ENCODE measurements at regions of chr14 and their contacts with region 1.

Region 1: DNA sequence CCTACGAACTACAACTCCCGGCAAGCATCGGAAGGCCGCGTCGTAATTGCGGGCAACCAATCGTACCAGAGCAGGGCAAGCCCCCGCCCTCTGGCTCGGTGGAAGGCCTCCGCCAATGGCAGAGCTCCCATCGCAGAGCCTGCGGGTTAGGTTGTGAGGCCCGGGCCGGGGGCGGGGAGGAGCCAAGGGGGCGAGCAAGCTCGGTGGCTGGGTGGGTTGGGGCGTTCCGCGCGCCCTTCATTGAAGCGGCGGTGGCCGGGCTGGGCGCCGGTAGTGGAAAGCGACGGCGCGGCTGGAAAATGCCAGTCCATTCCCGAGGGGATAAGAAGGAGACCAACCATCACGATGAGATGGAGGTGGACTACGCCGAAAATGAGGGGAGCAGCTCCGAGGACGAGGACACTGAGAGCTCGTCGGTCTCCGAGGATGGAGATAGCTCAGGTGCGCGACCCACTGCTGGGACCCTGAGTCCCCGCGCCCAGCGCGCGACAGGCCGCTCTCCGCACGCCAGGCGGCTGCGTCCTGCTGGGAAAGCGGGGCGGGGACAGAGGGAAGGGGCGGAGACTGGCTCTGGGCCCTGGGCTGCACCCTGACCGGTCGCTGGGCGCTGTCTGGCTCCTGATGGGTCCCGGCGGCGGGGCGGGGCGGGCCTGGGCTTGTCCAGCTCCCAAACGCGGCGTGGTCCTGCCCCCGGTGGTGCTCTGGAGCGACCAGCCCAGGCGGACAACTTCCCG is at the start of gene BRMS1L:
- DNase-seq: peak; percentile 91 to 98 (median 96)
- ATAC-seq: peak; percentile 98
- H3K4me3 ChIP-seq: peak within 1 kb of the TSS; percentile 92 to 97
- H3K4me3 Mint-ChIP-seq: peak within 1 kb of the TSS; percentile 95
- H3K27ac ChIP-seq: peak within 1 kb of the TSS; percentile 88 to 91
- H3K27ac Mint-ChIP-seq: peak within 1 kb of the TSS; percentile 89
- H3K4me1 ChIP-seq: no peaks in the 10 kb centered on the region
- H3K4me1 Mint-ChIP-seq: peaks cover 24% of the 10 kb centered on the region
- H3K27me3 ChIP-seq: no peaks in the 10 kb centered on the region
- H3K27me3 Mint-ChIP-seq: no peaks in the 10 kb centered on the region
- CTCF ChIP-seq: no peak
- total RNA-seq, gene BRMS1L: 15.5 to 17.9 TPM

Region 2: DNA sequence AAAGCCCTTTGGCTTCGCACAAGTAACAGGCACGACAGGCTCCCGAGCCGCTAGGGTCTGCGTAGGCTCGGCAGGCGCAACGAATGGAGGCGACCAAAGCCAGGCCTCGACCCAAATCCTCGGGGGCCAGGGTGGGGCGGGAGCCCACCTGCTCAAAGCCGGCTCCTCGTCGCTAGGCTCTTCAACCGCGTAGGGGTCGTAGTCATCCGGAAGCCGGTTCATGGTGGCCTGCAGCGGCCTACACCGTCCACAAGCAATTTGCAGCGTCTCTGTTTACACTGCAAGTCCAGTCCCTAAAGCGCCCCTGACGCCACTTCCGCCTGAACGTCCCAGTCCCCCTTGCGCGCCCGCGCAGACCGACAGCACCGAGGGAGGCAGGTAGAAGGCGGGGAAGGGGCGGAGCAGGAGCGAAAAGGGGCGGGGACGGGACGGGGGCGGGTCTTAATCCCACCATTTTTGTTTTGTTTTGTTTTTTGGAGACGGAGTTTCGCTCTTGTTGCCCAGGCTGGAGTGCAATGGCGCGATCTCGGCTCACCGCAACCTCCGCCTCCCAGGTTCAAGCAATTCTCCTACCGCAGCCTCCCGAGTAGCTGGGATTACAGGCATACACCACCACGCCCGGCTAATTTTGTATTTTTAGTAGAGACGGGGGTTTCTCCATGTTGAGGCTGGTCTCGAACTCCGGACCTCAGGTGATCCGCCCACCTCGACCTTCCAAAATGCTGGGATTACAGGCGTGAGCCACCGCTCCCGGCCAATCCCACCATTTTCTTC is 1286.8 kb before region 1 on chr14 and contains the start of gene EAPP:
- CTCF ChIA-PET with region 1: no interaction called
- POLR2A ChIA-PET with region 1: no interaction called
- intact Hi-C with region 1: loop called in 1 of 2 experiments (anchors 10 kb)
- DNase-seq: peak; percentile 88 to 97 (median 95)
- ATAC-seq: peak; percentile 98
- H3K4me3 ChIP-seq: peak within 1 kb of the TSS; percentile 94 to 95
- H3K4me3 Mint-ChIP-seq: peak within 1 kb of the TSS; percentile 97
- H3K27ac ChIP-seq: peak within 1 kb of the TSS; percentile 96 to 97
- H3K27ac Mint-ChIP-seq: peak within 1 kb of the TSS; percentile 98
- H3K4me1 ChIP-seq: peaks cover 16% of the 10 kb centered on the region
- H3K4me1 Mint-ChIP-seq: peaks cover 34% of the 10 kb centered on the region
- H3K27me3 ChIP-seq: no peaks in the 10 kb centered on the region
- H3K27me3 Mint-ChIP-seq: no peaks in the 10 kb centered on the region
- CTCF ChIP-seq: no peak
- total RNA-seq, gene EAPP: 91.0 to 91.4 TPM

Region 3: DNA sequence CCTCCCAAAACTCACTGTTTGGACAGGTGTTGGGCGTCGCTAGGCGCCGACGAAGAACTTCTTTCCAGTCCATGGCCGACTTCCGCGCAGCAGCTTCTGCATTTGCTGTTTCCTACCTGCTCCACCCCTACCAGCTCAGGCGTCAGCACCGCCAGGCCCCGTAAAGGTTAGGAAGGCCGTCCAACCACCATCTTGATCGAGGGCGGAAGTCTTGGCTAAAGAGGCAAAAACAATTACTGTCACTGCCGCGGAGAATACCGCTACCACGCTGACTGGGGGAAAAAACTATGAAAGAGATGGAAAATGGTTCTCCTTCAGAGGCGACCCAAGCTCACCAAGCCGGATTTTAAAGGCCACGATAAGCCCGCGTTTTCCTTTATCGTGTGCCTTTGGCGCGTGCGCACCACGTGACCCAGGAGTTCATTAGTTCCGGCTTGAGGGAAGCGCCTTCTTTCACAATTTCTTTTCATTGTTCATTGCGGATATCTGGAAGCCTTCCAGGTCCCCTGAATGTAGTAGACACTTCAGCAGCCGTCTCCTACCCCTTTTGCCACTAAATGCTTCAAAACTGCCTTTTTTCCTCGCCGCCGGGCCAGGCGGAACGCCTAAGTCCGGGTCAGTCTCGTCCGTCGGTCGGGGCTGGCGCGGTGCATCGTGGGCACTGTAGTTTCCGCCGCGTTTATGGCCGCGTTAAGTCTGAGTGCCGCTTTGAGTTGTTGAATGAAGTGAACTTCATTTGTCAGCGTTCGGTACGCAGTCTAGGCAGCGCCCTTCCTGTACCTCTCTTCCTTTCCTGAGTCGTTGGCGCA is 704.3 kb before region 1 on chr14 and contains the starts of genes PPP2R3C and PRORP:
- CTCF ChIA-PET with region 1: no interaction called
- POLR2A ChIA-PET with region 1: no interaction called
- intact Hi-C with region 1: loop called (anchors 1 to 5 kb)
- DNase-seq: peak; percentile 78 to 96 (median 88)
- ATAC-seq: peak; percentile 83
- H3K4me3 ChIP-seq: peak within 1 kb of the TSS; percentile 71 to 90
- H3K4me3 Mint-ChIP-seq: peak within 1 kb of the TSS; percentile 99
- H3K27ac ChIP-seq: peak within 1 kb of the TSS; percentile 96 to 97
- H3K27ac Mint-ChIP-seq: peak within 1 kb of the TSS; percentile 100
- H3K4me1 ChIP-seq: peaks cover 33% of the 10 kb centered on the region
- H3K4me1 Mint-ChIP-seq: peaks cover 66% of the 10 kb centered on the region
- H3K27me3 ChIP-seq: no peaks in the 10 kb centered on the region
- H3K27me3 Mint-ChIP-seq: no peaks in the 10 kb centered on the region
- CTCF ChIP-seq: no peak
- total RNA-seq, gene PPP2R3C: 44.2 to 51.4 TPM
- total RNA-seq, gene PRORP: 16.5 to 21.9 TPM

Region 4: GRCh38 chr14:35653045-35653444 is 173.3 kb before region 1 on chr14:
- CTCF ChIA-PET with region 1: no interaction called
- POLR2A ChIA-PET with region 1: no interaction called
- intact Hi-C with region 1: no loop called
- DNase-seq: no peak
- ATAC-seq: no peak
- H3K4me3 ChIP-seq: no peak overlapping the region
- H3K4me3 Mint-ChIP-seq: no peak overlapping the region
- H3K27ac ChIP-seq: no peak overlapping the region
- H3K27ac Mint-ChIP-seq: no peak overlapping the region
- H3K4me1 ChIP-seq: no peaks in the 10 kb centered on the region
- H3K4me1 Mint-ChIP-seq: no peaks in the 10 kb centered on the region
- H3K27me3 ChIP-seq: no peaks in the 10 kb centered on the region
- H3K27me3 Mint-ChIP-seq: no peaks in the 10 kb centered on the region
- CTCF ChIP-seq: no peak

Region 5: GRCh38 chr14:35808076-35808652 is 18.2 kb before region 1 on chr14:
- CTCF ChIA-PET with region 1: interaction called, 12 read pairs
- POLR2A ChIA-PET with region 1: interaction called, 9 read pairs
- intact Hi-C with region 1: loop called (anchors 1 to 2 kb)
- DNase-seq: peak in 3 of 9 experiments; percentile 16 to 63 (median 41)
- ATAC-seq: no peak
- H3K4me3 ChIP-seq: peak overlapping the region; percentile 68 to 80
- H3K4me3 Mint-ChIP-seq: peak overlapping the region; percentile 98
- H3K27ac ChIP-seq: peak overlapping the region; percentile 49 to 86
- H3K27ac Mint-ChIP-seq: peak overlapping the region; percentile 92
- H3K4me1 ChIP-seq: peaks cover 15% of the 10 kb centered on the region
- H3K4me1 Mint-ChIP-seq: peaks cover 38% of the 10 kb centered on the region
- H3K27me3 ChIP-seq: no peaks in the 10 kb centered on the region
- H3K27me3 Mint-ChIP-seq: no peaks in the 10 kb centered on the region
- CTCF ChIP-seq: no peak

Region 6: DNA sequence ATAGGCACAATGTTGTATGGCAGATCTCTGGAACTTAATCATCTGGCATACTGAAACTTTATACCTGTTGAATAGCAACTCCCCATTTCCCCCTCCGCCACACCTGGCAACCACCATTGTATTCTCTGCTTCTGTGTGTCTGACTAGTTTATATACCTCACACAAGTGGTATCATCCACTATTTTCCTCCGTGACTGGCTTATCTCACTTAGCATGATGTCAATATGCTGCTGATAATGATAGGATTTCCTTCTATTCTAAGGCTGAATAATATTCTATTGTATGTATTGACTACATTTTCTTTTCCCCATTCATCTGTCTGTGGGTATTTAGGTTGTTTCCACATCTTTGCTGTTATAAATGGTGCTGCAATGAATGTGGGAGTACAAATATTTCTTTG is 21.3 kb after region 1 on chr14:
- CTCF ChIA-PET with region 1: no interaction called
- POLR2A ChIA-PET with region 1: interaction called, 3 read pairs
- intact Hi-C with region 1: loop called in 1 of 2 experiments (anchors 1 kb)
- DNase-seq: no peak
- ATAC-seq: no peak
- H3K4me3 ChIP-seq: no peak overlapping the region
- H3K4me3 Mint-ChIP-seq: no peak overlapping the region
- H3K27ac ChIP-seq: no peak overlapping the region
- H3K27ac Mint-ChIP-seq: no peak overlapping the region
- H3K4me1 ChIP-seq: no peaks in the 10 kb centered on the region
- H3K4me1 Mint-ChIP-seq: peaks cover 4% of the 10 kb centered on the region
- H3K27me3 ChIP-seq: no peaks in the 10 kb centered on the region
- H3K27me3 Mint-ChIP-seq: no peaks in the 10 kb centered on the region
- CTCF ChIP-seq: no peak

Region 7: GRCh38 chr14:36315159-36315853 is 488.9 kb after region 1 on chr14:
- CTCF ChIA-PET with region 1: no interaction called
- POLR2A ChIA-PET with region 1: no interaction called
- intact Hi-C with region 1: loop called (anchors 1 to 2 kb)
- DNase-seq: peak in 2 of 9 experiments; percentile 5 to 15
- ATAC-seq: no peak
- H3K4me3 ChIP-seq: no peak overlapping the region
- H3K4me3 Mint-ChIP-seq: no peak overlapping the region
- H3K27ac ChIP-seq: no peak overlapping the region
- H3K27ac Mint-ChIP-seq: no peak overlapping the region
- H3K4me1 ChIP-seq: peaks cover 12% of the 10 kb centered on the region
- H3K4me1 Mint-ChIP-seq: peaks cover 37% of the 10 kb centered on the region
- H3K27me3 ChIP-seq: no peaks in the 10 kb centered on the region
- H3K27me3 Mint-ChIP-seq: no peaks in the 10 kb centered on the region
- CTCF ChIP-seq: no peak

Measured in CD8-positive, alpha-beta T cell (primary cell).